ENCODE measurements at regions of chr3 and their contacts with region 1.

Region 1: GRCh38 chr3:132416807-132417694 is at the start of gene DNAJC13:
- DNase-seq: peak; percentile 82 to 87
- ATAC-seq: peak; percentile 99
- H3K4me3 ChIP-seq: peak within 1 kb of the TSS; percentile 94 to 100 (median 98)
- H3K27ac ChIP-seq: peak within 1 kb of the TSS; percentile 88 to 95 (median 92)
- H3K4me1 ChIP-seq: peaks cover 16 to 21% of the 10 kb centered on the region in 2 donors
- H3K27me3 ChIP-seq: no peaks in the 10 kb centered on the region
- CTCF ChIP-seq: no peak
- POLR2A ChIP-seq: peak; percentile 53 to 61
- total RNA-seq, gene DNAJC13: 21.9 to 35.2 (median 26.5) TPM

Region 2: DNA sequence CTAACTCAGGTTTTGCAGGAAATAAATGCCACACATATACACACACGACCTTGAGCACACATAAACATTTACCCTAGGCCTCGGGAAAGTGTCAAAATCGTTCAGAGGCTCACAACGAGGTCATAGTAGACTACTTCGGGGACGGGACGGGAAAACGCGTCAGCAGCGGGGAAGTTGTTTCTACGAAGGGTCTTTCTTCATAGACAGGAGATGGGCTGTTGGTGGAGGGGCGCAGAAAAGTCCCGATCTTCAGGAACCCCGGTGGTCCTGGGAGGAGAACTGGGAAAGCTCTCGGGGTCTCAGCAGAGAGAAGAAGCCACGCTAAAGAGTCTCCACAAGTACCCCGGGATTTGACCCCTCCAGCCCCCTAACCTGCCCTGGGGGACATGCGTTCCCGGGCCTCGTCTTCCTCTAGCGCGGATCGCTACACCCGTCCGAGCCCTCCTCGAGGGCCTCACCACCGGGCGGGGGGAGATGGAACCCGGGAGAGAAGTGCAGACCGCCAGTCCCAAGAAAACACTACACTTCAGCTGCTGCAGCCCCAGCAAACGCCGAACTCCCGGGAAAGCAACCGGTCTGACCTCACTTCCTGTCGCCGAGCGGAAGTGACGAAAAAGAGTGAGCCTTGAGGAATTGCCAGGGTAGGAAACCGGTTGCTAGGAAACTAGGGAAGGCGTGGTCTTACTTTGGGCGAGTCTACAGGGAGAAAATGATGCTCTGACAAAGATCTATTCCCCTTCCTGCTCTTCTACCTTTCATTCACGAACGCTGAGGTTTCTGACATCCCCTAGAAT is 1670.6 kb before region 1 on chr3 and contains the start of gene PIK3R4:
- in situ Hi-C with region 1: no loop called
- intact Hi-C with region 1: loop called (anchors 5 kb)
- DNase-seq: peak; percentile 90 to 91
- ATAC-seq: peak; percentile 99 to 100
- H3K4me3 ChIP-seq: peak within 1 kb of the TSS; percentile 80 to 94 (median 90)
- H3K27ac ChIP-seq: peak within 1 kb of the TSS; percentile 85 to 93 (median 92)
- H3K4me1 ChIP-seq: peaks cover 44 to 55% of the 10 kb centered on the region in 2 donors
- H3K27me3 ChIP-seq: no peaks in the 10 kb centered on the region
- CTCF ChIP-seq: no peak
- POLR2A ChIP-seq: peak; percentile 68 to 79
- total RNA-seq, gene PIK3R4: 14.0 to 25.0 (median 17.7) TPM

Region 3: DNA sequence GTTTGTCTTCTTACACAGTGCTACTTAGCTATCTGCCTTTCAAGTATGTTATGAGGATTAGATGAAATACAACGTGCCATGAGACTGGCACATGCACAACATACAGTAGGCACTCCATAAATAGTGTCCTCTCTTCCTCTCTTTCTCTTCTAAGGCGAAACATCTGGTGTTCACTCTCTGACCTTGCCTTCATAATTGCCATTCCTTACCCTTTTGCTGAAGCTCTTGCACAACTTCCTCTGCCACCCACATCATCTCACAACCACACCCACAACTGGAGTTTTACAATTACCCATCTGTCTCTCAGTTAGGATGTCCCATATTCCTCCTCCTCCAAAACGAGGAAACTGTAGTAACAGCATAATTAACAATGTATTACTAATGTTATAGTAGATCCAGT is 126.2 kb before region 1 on chr3:
- in situ Hi-C with region 1: no loop called
- intact Hi-C with region 1: no loop called
- DNase-seq: peak in 1 of 2 donors; percentile 24
- ATAC-seq: peak in 1 of 2 donors; percentile 33
- H3K4me3 ChIP-seq: no peak overlapping the region
- H3K27ac ChIP-seq: no peak overlapping the region
- H3K4me1 ChIP-seq: no peaks in the 10 kb centered on the region
- H3K27me3 ChIP-seq: no peaks in the 10 kb centered on the region
- CTCF ChIP-seq: no peak
- POLR2A ChIP-seq: no peak

Region 4: DNA sequence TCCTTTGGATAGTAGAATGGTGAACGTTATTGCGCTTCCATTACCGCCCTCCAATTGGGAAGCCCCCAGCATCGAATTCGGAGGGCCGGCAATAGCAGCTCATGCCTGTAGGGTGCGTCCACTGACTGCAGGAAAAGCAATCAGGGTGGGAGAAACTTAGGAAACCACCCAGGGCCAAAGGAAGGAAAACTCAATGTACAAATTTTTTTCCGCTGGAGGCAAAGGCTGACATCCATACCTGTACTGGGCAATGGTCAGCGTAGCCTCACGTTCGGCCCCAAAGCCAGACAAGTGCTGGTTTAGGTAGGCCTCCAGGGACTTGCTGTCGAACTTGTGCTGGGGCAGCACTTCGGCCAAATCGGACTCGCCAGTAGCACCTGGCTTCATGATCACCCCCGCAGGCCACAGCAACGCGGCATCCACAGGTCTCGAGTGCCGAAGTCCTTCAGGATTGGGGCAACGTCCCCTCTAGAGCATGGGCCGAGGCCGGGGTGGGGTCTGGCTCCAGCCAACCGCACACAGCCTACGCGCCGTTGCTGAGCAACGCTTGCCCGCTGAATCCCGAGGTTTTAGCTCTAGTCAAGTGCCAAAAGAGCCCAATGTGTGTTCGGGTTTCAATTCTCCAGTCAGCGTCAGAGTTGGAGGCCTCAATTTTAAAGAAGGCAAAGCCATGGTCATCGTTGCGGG is 242.5 kb after region 1 on chr3 and contains the start of gene ACAD11:
- in situ Hi-C with region 1: no loop called
- intact Hi-C with region 1: loop called (anchors 1 kb)
- DNase-seq: peak; percentile 47 to 60
- ATAC-seq: peak; percentile 73
- H3K4me3 ChIP-seq: peak within 1 kb of the TSS; percentile 77 to 88 (median 80)
- H3K27ac ChIP-seq: peak within 1 kb of the TSS; percentile 87 to 91 (median 90)
- H3K4me1 ChIP-seq: peaks cover 29 to 37% of the 10 kb centered on the region in 2 donors
- H3K27me3 ChIP-seq: no peaks in the 10 kb centered on the region
- CTCF ChIP-seq: peak; percentile 46 to 77 (median 56)
- POLR2A ChIP-seq: peak; percentile 33 to 36
- total RNA-seq, gene ACAD11: 2.2 to 12.4 (median 4.4) TPM

Measured in gastrocnemius medialis (tissue), 4 donors.